SK-N-SH (cell line): ENCODE measurements at regions of chr10 and their contacts with region 1.

Region 1: DNA sequence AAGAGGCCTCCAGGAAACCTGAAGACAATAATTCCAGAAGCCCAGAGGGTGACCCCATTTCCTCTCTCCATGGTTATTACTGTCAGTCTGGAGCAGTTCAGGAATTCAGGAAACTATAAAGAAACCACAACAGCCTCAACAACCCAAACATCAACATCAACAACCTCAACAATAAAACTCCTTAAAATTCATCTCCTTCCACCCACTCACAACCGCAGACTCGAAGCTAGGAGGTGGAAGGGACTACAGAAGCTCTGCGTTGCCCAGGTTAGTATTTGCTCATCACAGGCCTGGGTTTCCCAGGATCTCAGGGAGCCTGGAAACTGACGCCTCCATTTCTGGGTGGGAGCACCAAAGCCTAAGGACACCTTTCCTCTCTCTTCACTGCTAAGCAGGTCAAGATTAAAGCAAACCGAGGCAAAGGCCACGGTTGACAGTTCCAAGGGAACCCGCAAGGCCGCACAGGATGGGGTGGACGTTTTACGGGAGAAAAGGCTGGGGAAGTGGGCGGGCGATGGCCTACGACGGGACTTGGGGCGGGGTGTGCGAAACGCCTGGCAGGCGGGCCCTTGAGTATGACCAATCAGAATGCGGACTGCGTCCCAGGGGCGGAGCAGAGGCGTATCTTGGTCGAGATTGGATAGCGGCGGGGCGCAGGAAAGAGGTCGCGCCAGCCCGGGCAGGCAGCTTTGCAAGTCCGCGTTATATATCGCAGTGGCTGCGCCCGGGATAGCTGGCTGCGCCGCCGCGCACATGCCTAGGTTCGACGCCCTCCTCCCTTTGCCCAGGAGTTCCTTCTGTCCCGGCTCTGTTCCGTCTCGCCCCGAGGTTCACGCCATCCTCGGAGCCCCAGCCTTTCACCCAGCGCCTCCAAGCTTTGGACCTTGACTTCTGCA is at the start of gene ELOVL3:
- DNase-seq: peak; percentile 98
- H3K4me3 ChIP-seq: peak within 1 kb of the TSS in 1 of 2 experiments; percentile 31; a peak in 1 of 4 replicates
- H3K27ac ChIP-seq: no peak within 1 kb of the TSS; a peak in 1 of 4 replicates
- H3K4me1 ChIP-seq: peaks cover 0 to 18% of the 10 kb centered on the region in 2 experiments; a peak in 2 of 4 replicates
- H3K27me3 ChIP-seq: peaks cover 17% of the 10 kb centered on the region; the same call in 1 of the 2 replicates
- CTCF ChIP-seq: no peak
- EP300 ChIP-seq: no peak
- RAD21 ChIP-seq: no peak
- polyA plus RNA-seq, gene ELOVL3: 0.25 and 0.29 TPM in 2 replicates

Region 2: DNA sequence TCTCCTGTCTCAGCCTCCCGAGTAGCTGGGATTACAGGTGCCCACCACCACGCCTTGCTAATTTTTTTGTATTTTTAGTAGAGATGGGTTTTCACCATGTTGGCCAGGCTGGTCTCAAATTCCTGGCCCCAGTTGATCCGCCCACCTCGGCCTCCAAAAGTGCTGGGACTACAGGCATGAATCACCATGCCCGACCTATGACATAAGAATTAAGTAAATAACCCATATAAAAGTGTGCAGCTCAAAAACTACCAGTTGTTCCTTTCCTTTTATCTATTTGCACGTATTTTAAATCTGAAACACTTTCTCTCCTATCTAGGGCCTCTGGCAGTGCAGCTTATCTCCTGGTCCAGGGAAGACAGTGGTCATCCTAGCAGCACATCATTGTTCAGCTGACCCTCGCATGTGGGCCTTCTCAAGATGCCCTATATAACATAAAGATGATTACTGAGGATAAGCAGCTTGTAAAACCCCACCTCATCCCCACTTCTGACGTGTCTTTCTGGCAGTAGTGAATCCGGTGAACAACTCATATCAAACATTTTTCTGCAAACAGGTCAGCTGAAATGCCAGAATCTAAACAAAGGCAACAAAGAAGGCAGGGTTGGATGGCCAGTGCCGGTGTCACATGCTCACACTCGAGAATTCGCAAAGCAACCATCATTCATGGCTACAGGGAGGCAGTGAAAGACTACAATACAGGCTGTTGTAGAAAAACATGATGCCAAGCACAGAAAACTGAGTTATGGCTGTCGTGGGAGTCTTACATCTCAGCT is 346.2 kb before region 1 on chr10:
- CTCF ChIA-PET with region 1: no interaction called
- POLR2A ChIA-PET with region 1: no interaction called
- DNase-seq: no peak
- H3K4me3 ChIP-seq: no peak overlapping the region
- H3K27ac ChIP-seq: peak overlapping the region in 1 of 2 experiments; percentile 47; a peak in 2 of 4 replicates
- H3K4me1 ChIP-seq: peaks cover 0 to 10% of the 10 kb centered on the region in 2 experiments; a peak in 1 of 4 replicates
- H3K27me3 ChIP-seq: no peaks in the 10 kb centered on the region
- CTCF ChIP-seq: no peak
- EP300 ChIP-seq: no peak
- RAD21 ChIP-seq: no peak

Region 3: DNA sequence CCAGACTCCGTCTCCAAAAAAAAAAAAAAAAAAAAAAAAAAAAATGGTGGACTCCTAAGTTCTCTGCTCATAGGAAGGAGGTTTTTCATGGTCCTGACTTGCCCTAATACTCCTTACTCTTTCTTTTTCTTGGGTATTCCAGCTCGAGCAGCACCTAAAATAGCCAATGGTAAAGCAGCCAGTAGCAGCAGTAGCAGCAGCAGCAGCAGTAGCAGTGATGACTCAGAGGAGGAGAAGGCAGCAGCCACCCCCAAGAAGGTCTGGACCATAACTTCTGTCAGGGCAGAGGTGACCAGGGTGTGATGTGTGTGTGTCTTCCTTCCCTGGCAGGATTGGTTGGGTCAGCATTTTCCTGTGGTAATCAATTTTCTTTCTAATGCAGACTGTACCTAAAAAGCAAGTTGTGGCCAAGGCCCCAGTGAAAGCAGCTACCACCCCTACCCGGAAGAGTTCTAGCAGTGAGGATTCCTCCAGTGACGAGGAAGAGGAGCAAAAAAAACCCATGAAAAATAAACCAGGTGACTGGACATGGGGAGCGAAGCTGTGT is 66.8 kb before region 1 on chr10:
- CTCF ChIA-PET with region 1: interaction called, 21 read pairs
- POLR2A ChIA-PET with region 1: no interaction called
- DNase-seq: no peak
- H3K4me3 ChIP-seq: no peak overlapping the region
- H3K27ac ChIP-seq: no peak overlapping the region
- H3K4me1 ChIP-seq: no peaks in the 10 kb centered on the region
- H3K27me3 ChIP-seq: no peaks in the 10 kb centered on the region
- CTCF ChIP-seq: no peak
- EP300 ChIP-seq: no peak
- RAD21 ChIP-seq: no peak

Region 4: DNA sequence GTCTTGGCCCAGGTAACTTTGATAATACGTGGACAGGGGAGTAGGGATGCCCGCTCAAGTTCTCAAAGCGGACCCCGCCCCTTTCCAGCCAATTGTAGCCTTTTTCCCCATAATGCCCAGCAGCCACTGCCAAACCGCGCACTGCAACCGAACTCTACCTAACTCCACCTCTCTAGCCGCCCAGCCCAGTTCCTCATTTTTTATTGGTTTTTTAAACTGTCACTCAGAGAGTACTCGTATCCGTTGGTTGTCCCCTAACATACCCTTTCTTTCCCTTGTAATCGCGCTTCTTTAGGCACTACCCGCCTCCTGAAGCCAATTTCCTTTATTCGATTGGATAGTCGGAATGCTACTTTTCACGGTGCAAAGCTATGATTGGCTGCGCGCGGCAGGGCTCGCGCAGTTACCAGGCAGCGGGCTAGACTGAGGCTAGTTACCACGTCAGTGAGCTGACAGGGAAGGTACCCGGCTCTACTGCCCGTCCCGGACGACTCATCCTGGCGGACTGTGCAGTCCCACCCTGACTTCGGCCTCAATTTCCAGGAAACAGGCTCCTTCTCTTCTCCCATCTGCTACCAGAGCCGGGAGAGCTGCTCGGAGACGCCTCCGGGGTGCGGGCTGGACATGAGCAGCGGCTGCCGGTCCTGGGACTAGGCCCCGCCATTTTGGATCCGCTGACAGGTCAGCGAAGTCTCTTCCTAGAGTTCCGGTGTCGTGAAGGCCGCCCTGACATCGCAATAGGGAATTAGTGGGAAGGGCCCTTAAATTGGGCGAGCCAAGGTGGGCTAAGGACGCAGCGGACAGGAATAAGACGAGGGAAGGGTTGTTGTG is 19.4 kb after region 1 on chr10 and contains the start of gene GBF1:
- CTCF ChIA-PET with region 1: interaction called, 60 read pairs
- POLR2A ChIA-PET with region 1: no interaction called
- DNase-seq: peak; percentile 94
- H3K4me3 ChIP-seq: peak within 1 kb of the TSS; percentile 86 to 94
- H3K27ac ChIP-seq: peak within 1 kb of the TSS; percentile 73 to 87; a peak in 3 of 4 replicates
- H3K4me1 ChIP-seq: peaks cover 12 to 34% of the 10 kb centered on the region in 2 experiments; a peak in 2 of 4 replicates
- H3K27me3 ChIP-seq: peaks cover 2% of the 10 kb centered on the region; the same call in 1 of the 2 replicates
- CTCF ChIP-seq: no peak
- EP300 ChIP-seq: peak in 1 of 2 experiments; percentile 73; a peak in 1 of 4 replicates
- RAD21 ChIP-seq: no peak
- polyA plus RNA-seq, gene GBF1: 11.4 and 12.3 TPM in 2 replicates

Region 5: GRCh38 chr10:102310361-102311024 is 84.6 kb after region 1 on chr10:
- CTCF ChIA-PET with region 1: interaction called, 15 read pairs
- POLR2A ChIA-PET with region 1: no interaction called
- DNase-seq: no peak
- H3K4me3 ChIP-seq: no peak overlapping the region; a peak in 1 of 4 replicates
- H3K27ac ChIP-seq: peak overlapping the region; percentile 65 to 69
- H3K4me1 ChIP-seq: peaks cover 12 to 32% of the 10 kb centered on the region in 2 experiments
- H3K27me3 ChIP-seq: no peaks in the 10 kb centered on the region
- CTCF ChIP-seq: no peak
- EP300 ChIP-seq: peak in 1 of 2 experiments; percentile 39; a peak in 1 of 4 replicates
- RAD21 ChIP-seq: no peak

Region 6: DNA sequence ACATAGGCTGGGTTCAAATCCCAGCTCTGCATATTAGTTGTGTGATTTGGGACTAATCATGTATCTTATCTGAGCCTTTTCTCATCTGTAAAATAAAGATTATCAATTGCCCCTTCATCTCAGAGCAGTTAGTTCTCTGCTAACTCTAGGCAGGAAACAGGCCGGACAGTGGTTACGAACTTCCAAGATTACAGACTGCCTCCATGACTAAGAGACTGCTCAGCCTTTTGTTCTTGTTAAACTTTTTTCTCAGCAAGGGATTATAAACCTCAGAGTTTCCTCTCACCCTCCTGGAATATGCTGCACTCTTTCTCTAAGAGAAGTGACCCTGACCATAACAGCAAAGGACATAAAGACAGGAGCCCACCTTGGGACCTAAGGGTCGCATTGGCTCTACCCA is 117.1 kb after region 1 on chr10:
- CTCF ChIA-PET with region 1: interaction called, 824 read pairs
- POLR2A ChIA-PET with region 1: no interaction called
- DNase-seq: no peak
- H3K4me3 ChIP-seq: no peak overlapping the region
- H3K27ac ChIP-seq: peak overlapping the region in 1 of 2 experiments; percentile 73; a peak in 2 of 4 replicates
- H3K4me1 ChIP-seq: peaks cover 0 to 20% of the 10 kb centered on the region in 2 experiments; a peak in 2 of 4 replicates
- H3K27me3 ChIP-seq: no peaks in the 10 kb centered on the region
- CTCF ChIP-seq: no peak
- EP300 ChIP-seq: 0 out of 4 replicates have a peak, but pooled peaks of 1 of the 2 experiments have one; percentile 12
- RAD21 ChIP-seq: no peak

Region 7: DNA sequence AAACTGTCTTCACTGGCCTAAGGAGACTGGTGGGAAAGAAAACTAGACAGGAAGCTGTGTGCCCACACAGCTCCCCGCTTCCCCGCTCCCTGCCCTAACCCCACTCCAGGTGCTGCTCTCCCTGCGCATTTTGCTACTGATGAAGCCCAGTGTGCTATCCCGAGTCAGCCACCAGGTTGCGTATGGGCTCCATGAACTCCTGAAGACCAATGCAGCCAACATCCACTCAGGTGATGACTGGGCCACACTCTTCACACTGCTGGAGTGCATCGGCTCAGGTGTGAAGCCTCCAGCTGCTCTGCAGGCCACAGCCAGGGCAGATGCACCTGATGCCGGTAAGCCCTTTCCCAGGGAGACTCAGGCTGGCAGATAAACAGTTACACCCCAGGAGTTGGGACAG is 149.4 kb after region 1 on chr10:
- CTCF ChIA-PET with region 1: interaction called, 28 read pairs
- POLR2A ChIA-PET with region 1: no interaction called
- DNase-seq: no peak
- H3K4me3 ChIP-seq: no peak overlapping the region
- H3K27ac ChIP-seq: no peak overlapping the region
- H3K4me1 ChIP-seq: no peaks in the 10 kb centered on the region
- H3K27me3 ChIP-seq: no peaks in the 10 kb centered on the region
- CTCF ChIP-seq: no peak
- EP300 ChIP-seq: no peak
- RAD21 ChIP-seq: 0 out of 2 replicates have a peak, but pooled peaks have one; percentile 13

Region 8: DNA sequence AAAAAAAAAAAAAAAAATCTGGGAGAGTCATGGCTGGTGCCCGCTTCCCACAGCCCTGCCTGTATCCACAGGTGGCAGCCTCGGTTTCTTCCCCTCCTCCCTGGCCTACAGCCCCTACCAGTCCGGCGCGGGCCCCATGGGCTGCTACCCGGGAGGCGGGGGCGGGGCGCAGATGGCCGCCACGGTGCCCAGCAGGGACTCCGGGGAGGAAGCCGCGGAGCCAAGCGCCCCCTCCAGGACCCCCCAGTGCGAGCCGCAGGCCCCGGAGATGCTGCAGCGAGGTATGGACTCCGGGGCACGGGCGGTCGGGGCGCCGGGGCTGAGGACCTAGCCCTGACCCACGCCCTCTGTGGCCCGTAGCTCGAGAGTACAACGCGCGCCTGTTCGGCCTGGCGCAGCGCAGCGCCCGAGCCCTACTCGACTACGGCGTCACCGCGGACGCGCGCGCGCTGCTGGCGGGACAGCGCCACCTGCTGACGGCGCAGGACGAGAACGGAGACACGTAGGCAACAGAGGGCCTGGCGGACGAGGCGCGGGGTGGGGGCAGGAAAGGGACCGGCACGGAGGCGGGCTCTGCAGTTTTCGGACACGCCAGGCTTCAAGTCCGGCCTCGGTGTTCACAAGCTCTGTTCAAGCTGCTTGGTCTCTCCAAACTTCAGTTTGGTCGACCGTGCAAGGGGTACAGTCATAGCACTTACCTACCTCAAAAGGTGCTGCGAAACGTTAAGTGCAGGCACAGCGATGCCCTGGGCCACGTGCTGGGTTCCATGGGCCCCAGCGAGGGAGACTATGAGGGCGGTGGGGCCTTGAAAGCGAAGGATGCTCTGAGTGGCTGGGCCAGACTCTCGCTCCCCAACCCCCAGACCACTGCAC is 173.6 kb after region 1 on chr10:
- CTCF ChIA-PET with region 1: interaction called, 163 read pairs
- POLR2A ChIA-PET with region 1: interaction called, 3 read pairs
- DNase-seq: peak; percentile 95
- H3K4me3 ChIP-seq: peak overlapping the region; percentile 49 to 64
- H3K27ac ChIP-seq: peak overlapping the region in 1 of 2 experiments; percentile 71; a peak in 1 of 4 replicates
- H3K4me1 ChIP-seq: peaks cover 0 to 23% of the 10 kb centered on the region in 2 experiments; a peak in 1 of 4 replicates
- H3K27me3 ChIP-seq: no peaks in the 10 kb centered on the region
- CTCF ChIP-seq: peak; percentile 87
- EP300 ChIP-seq: no peak
- RAD21 ChIP-seq: peak; percentile 55